Ascending aorta (tissue), 2 donors: ENCODE measurements at regions of chr11 and their contacts with region 1.

Region 1: DNA sequence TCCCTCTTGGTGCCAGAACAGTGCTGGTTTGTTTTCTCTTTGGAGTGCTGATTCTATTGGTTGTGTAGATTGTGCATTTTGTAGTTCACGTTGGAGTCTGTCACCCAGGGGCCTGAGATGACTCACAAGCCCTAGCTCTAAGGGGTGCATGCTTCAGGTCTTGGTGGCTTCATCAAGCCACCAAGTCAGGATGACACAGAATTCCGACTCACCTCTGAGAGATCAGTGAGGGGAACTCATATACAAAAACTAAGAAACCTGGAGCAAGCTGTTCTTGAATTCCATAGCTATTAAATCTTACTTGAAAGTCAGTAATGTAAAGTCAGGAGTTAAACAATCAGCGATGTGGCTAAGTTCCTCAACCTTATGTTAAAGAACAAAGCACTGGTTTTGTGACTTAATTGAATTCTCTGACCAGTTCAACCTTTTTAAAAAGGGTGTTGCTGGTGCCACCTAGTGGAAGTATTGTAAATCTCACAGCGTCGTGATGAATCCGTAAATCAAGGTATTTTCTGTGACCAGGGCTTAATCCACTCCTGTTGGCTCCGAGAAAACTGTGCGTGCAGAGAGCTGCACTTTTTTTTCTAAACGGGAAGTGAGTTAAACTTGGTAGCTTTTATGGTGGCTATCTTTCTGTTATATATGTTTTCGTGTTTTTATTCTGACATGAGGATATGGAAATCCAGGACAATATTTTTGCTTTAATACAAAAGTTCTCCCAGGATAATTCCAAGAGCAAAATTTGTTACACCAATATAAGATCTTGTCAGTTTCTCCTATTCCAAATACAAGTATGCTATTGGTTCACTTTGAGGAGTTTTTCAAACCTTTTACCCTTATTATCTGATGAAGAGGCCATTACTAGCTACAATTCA is 14.6 kb downstream of the MMP13 start:
- DNase-seq: no peak
- H3K4me3 ChIP-seq: no peak overlapping the region
- H3K27ac ChIP-seq: no peak overlapping the region
- H3K4me1 ChIP-seq: no peaks in the 10 kb centered on the region
- H3K27me3 ChIP-seq: no peaks in the 10 kb centered on the region
- CTCF ChIP-seq: peak; percentile 42 to 61 (median 53)

Region 2: GRCh38 chr11:101974255-101974654 is 966.7 kb before region 1 on chr11:
- intact Hi-C with region 1: no loop called
- DNase-seq: no peak
- H3K4me3 ChIP-seq: no peak overlapping the region
- H3K27ac ChIP-seq: no peak overlapping the region
- H3K4me1 ChIP-seq: no peaks in the 10 kb centered on the region
- H3K27me3 ChIP-seq: no peaks in the 10 kb centered on the region
- CTCF ChIP-seq: peak in 1 of 3 experiments; percentile 29

Region 3: GRCh38 chr11:102513869-102514268 is 427.1 kb before region 1 on chr11:
- intact Hi-C with region 1: no loop called
- DNase-seq: no peak
- H3K4me3 ChIP-seq: no peak overlapping the region
- H3K27ac ChIP-seq: no peak overlapping the region
- H3K4me1 ChIP-seq: peaks cover 0 to 5% of the 10 kb centered on the region in 2 donors
- H3K27me3 ChIP-seq: no peaks in the 10 kb centered on the region
- CTCF ChIP-seq: no peak

Region 4: GRCh38 chr11:102807921-102808320 is 133.0 kb before region 1 on chr11:
- intact Hi-C with region 1: no loop called
- DNase-seq: no peak
- H3K4me3 ChIP-seq: no peak overlapping the region
- H3K27ac ChIP-seq: no peak overlapping the region
- H3K4me1 ChIP-seq: no peaks in the 10 kb centered on the region
- H3K27me3 ChIP-seq: no peaks in the 10 kb centered on the region
- CTCF ChIP-seq: no peak

Region 5: GRCh38 chr11:102831489-102832440 is 109.2 kb before region 1 on chr11:
- intact Hi-C with region 1: loop called (anchors 2 kb)
- DNase-seq: no peak
- H3K4me3 ChIP-seq: peak overlapping the region; percentile 16 to 19
- H3K27ac ChIP-seq: no peak overlapping the region
- H3K4me1 ChIP-seq: no peaks in the 10 kb centered on the region
- H3K27me3 ChIP-seq: no peaks in the 10 kb centered on the region
- CTCF ChIP-seq: peak in 1 of 3 experiments; percentile 40